RWPE1 (cell line): ENCODE measurements at regions of chr2 and their contacts with region 1.

Region 1: DNA sequence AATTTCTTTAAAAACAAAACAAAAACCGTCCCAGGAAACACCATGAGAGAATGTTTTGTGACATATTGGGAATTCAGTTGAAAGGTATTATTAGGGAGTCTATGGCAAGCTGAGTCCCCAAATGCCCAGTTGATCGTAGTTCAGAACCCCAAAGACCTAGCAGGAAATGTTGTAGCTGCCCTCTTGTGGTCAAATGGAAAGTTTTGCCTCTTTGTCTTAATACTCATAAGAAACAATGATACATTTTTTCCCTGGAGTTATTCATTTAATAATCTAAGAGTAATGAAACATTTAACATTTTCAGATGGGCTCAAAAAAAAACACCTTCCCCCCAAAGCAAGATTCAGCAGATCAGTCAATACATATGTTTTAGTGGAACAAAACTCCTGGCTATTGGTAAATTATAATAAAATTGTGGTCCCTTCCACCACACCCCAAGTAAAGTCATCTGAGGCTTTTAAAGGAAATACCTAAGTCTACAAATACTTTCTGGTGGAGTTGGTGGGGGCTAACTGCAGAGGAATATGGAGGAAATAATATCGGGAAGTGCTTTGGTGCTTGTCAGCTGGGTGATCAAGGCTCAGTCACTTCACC is 37.8 kb upstream of the EFEMP1 start:
- DNase-seq: peak; percentile 38
- H3K27ac ChIP-seq: no peak overlapping the region
- CTCF ChIP-seq: peak; percentile 78

Region 2: GRCh38 chr2:55729136-55729867 is 232.1 kb before region 1 on chr2:
- CTCF ChIA-PET with region 1: no interaction called
- POLR2A ChIA-PET with region 1: no interaction called
- DNase-seq: no peak
- H3K27ac ChIP-seq: no peak overlapping the region
- CTCF ChIP-seq: no peak

Region 3: DNA sequence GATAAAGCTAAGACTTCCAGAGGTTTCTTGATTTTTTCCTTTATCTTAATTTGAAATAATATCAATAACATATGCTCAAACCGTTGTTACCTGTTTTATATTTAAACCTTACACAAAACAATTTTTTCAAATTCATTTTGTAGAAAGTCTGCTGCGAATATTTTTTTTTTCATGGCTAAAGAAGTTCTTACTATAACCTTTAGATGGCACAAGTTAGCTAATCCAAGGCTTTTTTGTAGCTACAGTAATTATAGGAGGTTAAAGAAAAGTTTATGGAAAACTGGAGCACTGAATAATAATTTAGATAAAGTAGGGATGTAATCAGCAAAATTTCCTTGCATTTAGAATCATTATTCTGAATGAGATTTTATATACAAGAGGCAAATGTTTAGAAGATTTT is 189.8 kb before region 1 on chr2:
- CTCF ChIA-PET with region 1: interaction called, 25 read pairs
- POLR2A ChIA-PET with region 1: no interaction called
- DNase-seq: peak; percentile 38
- H3K27ac ChIP-seq: no peak overlapping the region
- CTCF ChIP-seq: peak; percentile 85

Region 4: DNA sequence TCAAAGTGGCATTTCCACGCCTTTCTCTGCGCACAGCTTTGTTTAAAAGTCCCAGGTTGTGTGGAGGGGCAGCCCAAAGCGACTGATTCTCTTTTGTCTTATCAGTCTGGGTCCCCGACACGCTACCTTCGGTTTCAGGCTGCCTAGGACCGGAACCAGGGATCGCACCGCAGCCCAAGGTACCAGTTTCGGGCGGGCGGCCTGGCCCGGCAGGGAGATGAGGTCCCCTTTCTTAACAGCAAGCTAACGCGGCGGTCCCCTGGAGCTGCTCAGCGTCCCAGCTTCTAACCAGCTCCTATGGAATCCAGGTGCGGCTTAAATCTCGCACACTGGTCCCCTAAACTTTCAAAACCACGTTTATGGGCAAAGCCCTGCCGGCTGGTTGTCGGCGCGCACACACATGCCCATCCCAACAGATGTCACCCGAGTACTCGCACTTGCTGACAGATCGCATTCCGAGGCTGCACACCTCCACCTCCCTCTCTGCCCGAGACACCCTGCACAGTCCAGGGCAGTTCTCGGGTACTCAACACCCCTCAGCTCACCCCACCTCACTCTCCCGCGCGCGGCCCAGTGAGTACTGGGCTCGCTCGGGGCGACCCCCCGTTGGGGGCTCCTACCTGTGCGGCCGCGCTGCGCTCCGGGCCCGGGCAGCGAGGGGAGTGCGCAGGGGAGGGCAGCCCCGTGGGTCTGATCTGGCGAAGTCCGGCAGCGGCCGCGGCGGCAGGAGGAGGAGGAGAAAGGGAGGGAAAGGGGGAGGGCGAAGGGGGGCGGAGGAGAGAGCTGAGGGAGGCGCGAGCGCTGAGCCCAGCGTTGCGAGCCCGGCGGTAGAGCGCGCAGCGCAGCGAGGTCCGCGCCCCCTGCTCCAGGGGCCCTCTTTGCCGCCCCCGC is 38.1 kb before region 1 on chr2 and contains the start of gene EFEMP1:
- CTCF ChIA-PET with region 1: interaction called, 11 read pairs
- POLR2A ChIA-PET with region 1: no interaction called
- DNase-seq: peak; percentile 69
- H3K27ac ChIP-seq: peak within 1 kb of the TSS; percentile 83
- CTCF ChIP-seq: peak; percentile 21

Region 5: GRCh38 chr2:55976681-55977080 is 15.3 kb after region 1 on chr2:
- CTCF ChIA-PET with region 1: no interaction called
- POLR2A ChIA-PET with region 1: no interaction called
- DNase-seq: no peak
- H3K27ac ChIP-seq: no peak overlapping the region
- CTCF ChIP-seq: no peak

Region 6: DNA sequence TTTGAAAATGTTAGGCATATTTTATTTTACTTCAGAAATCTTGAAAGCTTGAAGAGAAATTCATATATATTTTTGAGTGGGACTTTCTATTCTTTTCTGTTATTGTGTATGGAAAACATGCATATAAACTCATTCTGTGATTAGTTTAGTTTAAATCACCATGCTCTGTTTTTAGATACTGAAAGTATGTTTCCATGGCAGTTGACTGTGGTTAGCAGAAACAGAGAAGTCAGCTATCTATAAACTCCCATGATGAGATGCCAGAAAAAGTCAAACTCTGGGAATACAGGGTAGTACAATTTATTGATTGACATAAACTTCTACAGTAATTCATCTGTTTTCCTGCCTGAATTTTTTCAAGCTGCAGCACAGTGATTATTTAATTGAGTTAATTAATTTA is 1179.9 kb after region 1 on chr2:
- CTCF ChIA-PET with region 1: no interaction called
- POLR2A ChIA-PET with region 1: no interaction called
- DNase-seq: no peak
- H3K27ac ChIP-seq: no peak overlapping the region
- CTCF ChIP-seq: no peak